Endothelial cell of umbilical vein (primary cell): ENCODE measurements at regions of chr20 and their contacts with region 1.

Region 1: GRCh38 chr20:6519556-6519955 is 247.9 kb upstream of the BMP2 start:
- DNase-seq: peak; percentile 52
- H3K4me3 ChIP-seq: no peak overlapping the region
- H3K27ac ChIP-seq: peak overlapping the region; percentile 68
- H3K4me1 ChIP-seq: peaks cover 31% of the 10 kb centered on the region
- H3K27me3 ChIP-seq: no peaks in the 10 kb centered on the region
- CTCF ChIP-seq: no peak
- POLR2A ChIP-seq: no peak

Region 2: GRCh38 chr20:6341491-6341890 is 178.1 kb before region 1 on chr20:
- CTCF ChIA-PET with region 1: no interaction called
- POLR2A ChIA-PET with region 1: no interaction called
- dilution Hi-C with region 1: no loop called
- intact Hi-C with region 1: no loop called
- DNase-seq: no peak
- H3K4me3 ChIP-seq: no peak overlapping the region
- H3K27ac ChIP-seq: no peak overlapping the region
- H3K4me1 ChIP-seq: no peaks in the 10 kb centered on the region
- H3K27me3 ChIP-seq: no peaks in the 10 kb centered on the region
- CTCF ChIP-seq: no peak
- POLR2A ChIP-seq: no peak

Region 3: GRCh38 chr20:6501061-6501460 is 18.5 kb before region 1 on chr20:
- CTCF ChIA-PET with region 1: no interaction called
- POLR2A ChIA-PET with region 1: no interaction called
- dilution Hi-C with region 1: no loop called
- intact Hi-C with region 1: loop called (anchors 2 kb)
- DNase-seq: peak; percentile 81
- H3K4me3 ChIP-seq: no peak overlapping the region
- H3K27ac ChIP-seq: peak overlapping the region; percentile 22
- H3K4me1 ChIP-seq: peaks cover 12% of the 10 kb centered on the region
- H3K27me3 ChIP-seq: no peaks in the 10 kb centered on the region
- CTCF ChIP-seq: no peak
- POLR2A ChIP-seq: no peak

Region 4: GRCh38 chr20:6558341-6558740 is 38.8 kb after region 1 on chr20:
- CTCF ChIA-PET with region 1: no interaction called
- POLR2A ChIA-PET with region 1: no interaction called
- dilution Hi-C with region 1: no loop called
- intact Hi-C with region 1: no loop called
- DNase-seq: peak; percentile 18
- H3K4me3 ChIP-seq: no peak overlapping the region
- H3K27ac ChIP-seq: no peak overlapping the region
- H3K4me1 ChIP-seq: peaks cover 22% of the 10 kb centered on the region
- H3K27me3 ChIP-seq: no peaks in the 10 kb centered on the region
- CTCF ChIP-seq: no peak
- POLR2A ChIP-seq: no peak

Region 5: DNA sequence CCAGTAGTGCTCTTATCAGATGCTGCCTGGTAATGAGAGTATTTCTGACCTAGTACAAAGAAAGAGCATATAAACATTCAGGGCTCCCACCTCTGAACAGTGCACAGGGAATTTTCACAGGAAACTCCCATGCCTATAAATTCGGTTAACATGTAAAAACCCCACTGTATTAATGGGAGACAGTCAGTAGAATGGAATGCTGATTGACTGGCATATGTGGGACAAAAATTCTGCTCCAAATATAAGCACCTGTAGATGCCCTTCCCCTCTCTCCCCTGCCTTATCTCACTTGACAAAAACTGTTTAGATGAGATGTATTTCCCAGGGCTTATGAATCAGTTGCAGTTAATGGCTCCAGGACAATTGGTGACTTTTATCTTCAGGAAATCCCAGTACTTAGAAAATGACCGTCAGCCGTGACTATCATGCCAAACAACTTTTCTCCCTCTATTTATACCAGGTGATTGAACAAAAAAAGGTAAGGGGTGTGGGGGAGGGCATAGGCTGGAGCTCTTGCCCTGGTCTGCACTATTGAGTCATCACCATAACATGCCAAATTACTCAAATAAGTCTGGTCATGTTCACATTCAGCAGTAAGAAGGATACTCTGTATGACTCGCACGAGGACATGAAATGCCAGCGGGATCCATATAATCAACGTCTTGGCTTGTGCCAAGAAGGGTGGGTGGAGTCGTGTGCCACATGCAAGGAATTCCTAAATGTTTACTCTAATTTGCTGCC is 71.5 kb after region 1 on chr20:
- CTCF ChIA-PET with region 1: no interaction called
- POLR2A ChIA-PET with region 1: no interaction called
- dilution Hi-C with region 1: no loop called
- intact Hi-C with region 1: no loop called
- DNase-seq: peak; percentile 83
- H3K4me3 ChIP-seq: no peak overlapping the region
- H3K27ac ChIP-seq: peak overlapping the region; percentile 73
- H3K4me1 ChIP-seq: peaks cover 32% of the 10 kb centered on the region
- H3K27me3 ChIP-seq: no peaks in the 10 kb centered on the region
- CTCF ChIP-seq: no peak
- POLR2A ChIP-seq: no peak

Region 6: GRCh38 chr20:7392542-7393206 is 873.1 kb after region 1 on chr20:
- CTCF ChIA-PET with region 1: no interaction called
- POLR2A ChIA-PET with region 1: no interaction called
- dilution Hi-C with region 1: no loop called
- intact Hi-C with region 1: loop called (anchors 10 kb)
- DNase-seq: peak; percentile 56
- H3K4me3 ChIP-seq: no peak overlapping the region
- H3K27ac ChIP-seq: no peak overlapping the region
- H3K4me1 ChIP-seq: peaks cover 4% of the 10 kb centered on the region
- H3K27me3 ChIP-seq: no peaks in the 10 kb centered on the region
- CTCF ChIP-seq: no peak
- POLR2A ChIP-seq: no peak